Panc1 (cell line): ENCODE measurements at regions of chr15 and their contacts with region 1.

Region 1: DNA sequence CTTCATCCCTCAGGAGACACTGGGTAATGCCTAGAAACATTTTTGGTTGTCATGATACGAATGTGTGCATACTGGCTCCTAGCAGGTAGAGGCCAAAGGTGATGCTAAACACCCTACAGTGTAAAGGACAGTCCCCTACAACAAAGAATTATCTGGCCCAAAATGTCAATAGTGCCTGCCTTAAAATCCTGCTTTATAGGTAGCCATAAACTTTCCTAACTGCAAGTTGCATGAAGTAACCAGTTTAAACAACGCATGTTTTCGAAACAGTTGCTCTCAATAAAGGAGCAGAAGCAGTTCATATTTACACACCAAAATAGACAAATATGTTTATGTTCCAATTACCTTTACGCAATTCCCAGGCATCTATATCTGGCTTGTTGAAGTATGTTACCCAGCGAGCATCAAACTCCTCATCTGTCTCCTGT is 9.1 kb downstream of the COX5A start:
- DNase-seq: no peak
- ATAC-seq: no peak
- H3K4me3 ChIP-seq: no peak overlapping the region
- H3K27ac ChIP-seq: no peak overlapping the region
- H3K4me1 ChIP-seq: no peaks in the 10 kb centered on the region
- H3K27me3 ChIP-seq: no peaks in the 10 kb centered on the region
- CTCF ChIP-seq: no peak

Region 2: GRCh38 chr15:74598126-74598842 is 330.5 kb before region 1 on chr15:
- CTCF ChIA-PET with region 1: interaction called, 12 read pairs
- POLR2A ChIA-PET with region 1: no interaction called
- in situ Hi-C with region 1: no loop called
- intact Hi-C with region 1: no loop called
- DNase-seq: no peak
- ATAC-seq: peak; percentile 95
- H3K4me3 ChIP-seq: peak overlapping the region; percentile 67 to 77
- H3K27ac ChIP-seq: peak overlapping the region; percentile 92
- H3K4me1 ChIP-seq: peaks cover 16% of the 10 kb centered on the region
- H3K27me3 ChIP-seq: no peaks in the 10 kb centered on the region
- CTCF ChIP-seq: no peak

Region 3: DNA sequence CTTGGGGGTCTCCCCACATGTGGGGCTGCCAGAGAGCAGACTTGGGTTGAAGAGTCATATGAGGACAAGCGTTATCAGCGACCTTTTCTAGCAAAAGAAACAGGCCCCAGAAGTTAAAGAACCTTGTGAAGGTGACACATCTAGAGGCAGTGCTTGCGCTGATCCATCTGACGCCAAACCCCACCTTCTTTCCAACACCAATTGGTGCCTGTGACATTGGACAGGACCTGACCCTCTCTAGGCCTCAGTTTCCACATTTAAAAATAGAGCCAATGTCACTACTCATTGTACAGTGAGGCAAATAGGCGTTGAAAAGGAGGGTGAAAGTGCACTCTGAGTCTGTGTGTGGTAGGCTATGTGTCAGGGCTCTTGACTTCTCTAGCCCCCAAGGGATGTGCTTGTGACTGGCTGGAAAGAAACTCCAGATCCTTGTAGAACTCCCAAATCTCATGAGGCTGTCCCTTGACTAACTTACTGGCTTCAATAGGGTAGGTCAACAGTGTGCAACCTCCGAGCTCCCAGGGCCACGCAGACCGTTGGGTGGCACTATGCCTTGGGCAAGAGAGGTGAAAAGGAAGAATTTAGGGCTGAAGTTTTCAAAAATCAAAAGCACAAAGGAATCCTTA is 21.5 kb before region 1 on chr15:
- CTCF ChIA-PET with region 1: interaction called, 7 read pairs
- POLR2A ChIA-PET with region 1: interaction called, 10 read pairs
- in situ Hi-C with region 1: no loop called
- intact Hi-C with region 1: no loop called
- DNase-seq: no peak
- ATAC-seq: peak; percentile 58
- H3K4me3 ChIP-seq: peak overlapping the region; percentile 89 to 94
- H3K27ac ChIP-seq: peak overlapping the region; percentile 95
- H3K4me1 ChIP-seq: peaks cover 13% of the 10 kb centered on the region
- H3K27me3 ChIP-seq: no peaks in the 10 kb centered on the region
- CTCF ChIP-seq: no peak

Region 4: DNA sequence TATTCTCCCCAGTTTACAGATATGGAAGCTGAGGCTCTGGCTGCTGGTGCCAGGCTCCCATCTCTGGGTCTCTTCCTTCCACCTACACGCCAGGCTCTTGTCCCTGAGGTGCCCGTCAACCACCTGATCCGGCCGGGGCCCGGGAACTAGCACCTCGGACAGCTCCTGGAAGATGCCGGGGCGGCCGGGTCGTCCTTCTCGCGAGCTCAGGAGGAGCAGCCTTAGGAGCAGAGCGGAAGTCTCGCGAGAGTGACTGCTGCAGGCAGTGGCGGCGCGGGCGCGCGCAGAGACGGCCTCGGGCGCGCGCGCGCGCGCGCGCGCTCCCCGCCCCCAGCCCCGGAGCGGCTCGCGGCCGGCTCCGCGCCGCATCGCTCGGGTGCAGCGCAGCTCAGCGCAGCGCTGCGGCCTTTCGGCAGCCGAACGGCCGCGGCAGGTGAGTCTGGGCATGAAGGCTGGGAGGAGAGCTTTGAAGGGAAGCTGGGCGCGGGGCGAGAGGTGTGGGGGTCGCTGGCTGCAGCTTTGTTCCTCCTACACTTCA is 66.5 kb after region 1 on chr15 and contains the start of gene SCAMP5:
- CTCF ChIA-PET with region 1: no interaction called
- POLR2A ChIA-PET with region 1: no interaction called
- in situ Hi-C with region 1: no loop called
- intact Hi-C with region 1: no loop called
- DNase-seq: peak; percentile 41
- ATAC-seq: peak; percentile 92
- H3K4me3 ChIP-seq: peak within 1 kb of the TSS; percentile 57 to 69
- H3K27ac ChIP-seq: no peak within 1 kb of the TSS
- H3K4me1 ChIP-seq: peaks cover 3% of the 10 kb centered on the region; the same call in 1 of the 2 replicates
- H3K27me3 ChIP-seq: peaks cover 5% of the 10 kb centered on the region; the same call in 1 of the 2 replicates
- CTCF ChIP-seq: no peak
- total RNA-seq, gene SCAMP5: 11.2 TPM

Region 5: DNA sequence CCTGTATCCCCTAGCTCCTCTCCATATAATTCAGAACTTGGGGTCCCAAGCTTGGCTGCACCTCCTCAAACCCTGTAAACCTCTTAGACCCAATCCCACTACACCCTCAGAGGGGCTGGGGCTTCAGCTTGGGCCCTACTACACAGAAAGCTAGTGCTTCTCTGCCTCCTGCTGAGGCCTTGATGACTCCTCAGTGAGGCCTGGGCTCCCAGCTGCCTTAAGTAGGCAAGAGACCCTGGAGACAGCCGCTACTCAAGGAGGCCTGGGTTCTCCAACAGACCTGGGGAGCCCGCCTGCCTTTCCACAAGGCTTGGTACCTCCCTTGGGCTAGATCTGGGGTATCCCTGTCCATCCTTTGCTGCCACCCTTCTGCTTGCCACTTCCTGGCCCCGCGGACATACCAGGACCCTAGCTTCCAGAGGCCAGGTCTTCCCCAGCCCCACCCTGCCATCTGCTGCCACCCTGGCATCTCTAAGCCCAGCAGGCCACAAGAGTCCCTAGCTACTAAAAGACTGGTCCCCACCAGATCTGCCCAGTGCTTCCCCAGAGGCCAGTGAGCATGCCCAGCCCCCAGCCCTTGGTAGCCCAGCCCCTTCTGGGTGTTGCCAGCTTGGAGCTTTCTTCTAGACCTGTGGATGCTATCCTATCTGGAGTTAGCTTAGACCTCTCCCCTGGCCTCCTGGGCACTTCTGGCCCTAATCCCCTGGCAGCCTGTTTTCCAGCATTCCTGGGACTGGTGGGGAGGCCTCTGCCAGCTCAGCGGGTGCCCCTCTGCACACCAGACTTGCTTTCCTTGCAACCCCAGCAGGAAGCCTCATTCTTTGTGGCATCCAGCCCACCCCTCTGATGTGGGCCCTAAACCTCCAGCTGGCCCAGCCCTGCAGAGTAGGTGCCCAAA is 286.6 kb after region 1 on chr15:
- CTCF ChIA-PET with region 1: no interaction called
- POLR2A ChIA-PET with region 1: no interaction called
- in situ Hi-C with region 1: no loop called
- intact Hi-C with region 1: no loop called
- DNase-seq: no peak
- ATAC-seq: peak; percentile 56
- H3K4me3 ChIP-seq: no peak overlapping the region
- H3K27ac ChIP-seq: no peak overlapping the region
- H3K4me1 ChIP-seq: no peaks in the 10 kb centered on the region
- H3K27me3 ChIP-seq: no peaks in the 10 kb centered on the region
- CTCF ChIP-seq: no peak